ENCODE measurements at regions of chr5 and their contacts with region 1.

Region 1: DNA sequence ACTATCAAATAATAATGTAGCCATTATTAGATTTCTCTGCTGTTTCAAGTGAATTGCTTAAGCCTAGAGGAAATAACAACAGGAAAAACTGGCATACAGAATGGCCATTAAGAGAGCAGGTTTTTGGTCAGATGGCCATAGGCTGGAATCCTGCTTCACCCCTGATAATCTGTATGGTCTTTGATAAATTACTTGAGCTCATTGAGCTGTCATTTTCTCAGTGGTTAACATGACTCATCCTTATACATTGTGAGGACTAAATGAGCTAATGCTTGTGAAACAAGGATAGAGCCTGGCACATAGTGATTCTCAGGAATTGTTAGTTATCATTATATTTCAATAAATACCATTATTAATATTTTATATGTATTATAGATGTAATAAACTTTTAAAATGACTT is 516.5 kb downstream of the KIF4B start:
- DNase-seq: no peak
- ATAC-seq: no peak
- H3K4me3 Mint-ChIP-seq: no peak overlapping the region
- H3K27ac Mint-ChIP-seq: no peak overlapping the region
- H3K4me1 Mint-ChIP-seq: no peaks in the 10 kb centered on the region
- H3K27me3 Mint-ChIP-seq: no peaks in the 10 kb centered on the region

Region 2: DNA sequence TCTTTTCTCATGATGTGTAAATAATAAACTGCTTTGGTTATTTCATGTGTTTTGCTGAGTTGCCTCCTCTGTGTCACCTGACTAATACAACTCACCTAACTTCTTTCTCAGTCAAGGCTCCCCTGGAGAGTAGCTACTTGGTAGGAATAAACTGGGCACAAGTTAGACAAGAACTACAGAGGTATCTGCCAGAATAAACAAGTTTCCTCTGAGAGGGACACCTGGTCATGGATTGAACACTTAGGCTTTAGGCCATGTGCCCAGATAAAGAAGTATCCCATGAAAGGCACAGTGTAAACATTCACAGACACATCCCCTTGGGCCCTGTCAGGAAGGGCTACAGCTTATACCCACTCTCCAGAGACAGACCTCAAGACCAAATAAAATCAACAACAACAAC is 16.0 kb after region 1 on chr5:
- CTCF ChIA-PET with region 1: interaction called, 3 read pairs
- POLR2A ChIA-PET with region 1: no interaction called
- intact Hi-C with region 1: loop called (anchors 1 kb)
- DNase-seq: no peak
- ATAC-seq: no peak
- H3K4me3 Mint-ChIP-seq: no peak overlapping the region
- H3K27ac Mint-ChIP-seq: no peak overlapping the region
- H3K4me1 Mint-ChIP-seq: no peaks in the 10 kb centered on the region
- H3K27me3 Mint-ChIP-seq: no peaks in the 10 kb centered on the region

Region 3: DNA sequence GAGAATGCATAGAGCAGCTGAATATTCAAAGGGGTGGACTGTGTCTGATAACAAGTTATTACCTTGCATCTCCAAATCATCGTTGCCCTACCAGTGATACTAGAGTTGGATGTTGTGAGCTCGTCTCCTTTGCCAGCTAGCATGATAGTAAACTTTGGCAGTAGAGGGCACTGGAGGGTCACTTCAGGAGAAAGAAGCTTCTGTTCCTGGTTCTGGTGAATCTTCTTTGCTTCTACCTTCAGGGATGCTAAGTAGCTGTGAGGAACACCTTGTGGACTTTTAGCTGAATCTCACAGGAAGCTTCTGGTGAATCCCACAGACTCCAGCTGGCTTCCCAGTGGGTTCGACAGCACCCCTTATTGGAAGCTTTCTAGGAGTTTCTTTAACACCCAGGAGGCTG is 170.3 kb after region 1 on chr5:
- CTCF ChIA-PET with region 1: no interaction called
- POLR2A ChIA-PET with region 1: no interaction called
- intact Hi-C with region 1: no loop called
- DNase-seq: no peak
- ATAC-seq: no peak
- H3K4me3 Mint-ChIP-seq: no peak overlapping the region
- H3K27ac Mint-ChIP-seq: no peak overlapping the region
- H3K4me1 Mint-ChIP-seq: no peaks in the 10 kb centered on the region
- H3K27me3 Mint-ChIP-seq: no peaks in the 10 kb centered on the region

Measured in activated CD4-positive, alpha-beta T cell treated with anti-CD3 and anti-CD28 coated beads for 36 hours (primary cell).